ENCODE measurements at regions of chrX and their contacts with region 1.

Region 1: GRCh38 chrX:115584696-115585095 is 23.7 kb downstream of the PLS3 start:
- DNase-seq: no peak
- H3K4me3 Mint-ChIP-seq: no peak overlapping the region
- H3K27ac Mint-ChIP-seq: no peak overlapping the region
- H3K4me1 Mint-ChIP-seq: no peaks in the 10 kb centered on the region
- H3K27me3 Mint-ChIP-seq: no peaks in the 10 kb centered on the region

Region 2: GRCh38 chrX:115602729-115603389 is 18.2 kb after region 1 on chrX:
- CTCF ChIA-PET with region 1: no interaction called
- POLR2A ChIA-PET with region 1: no interaction called
- intact Hi-C with region 1: no loop called
- DNase-seq: no peak
- H3K4me3 Mint-ChIP-seq: no peak overlapping the region
- H3K27ac Mint-ChIP-seq: no peak overlapping the region
- H3K4me1 Mint-ChIP-seq: no peaks in the 10 kb centered on the region
- H3K27me3 Mint-ChIP-seq: no peaks in the 10 kb centered on the region

Region 3: GRCh38 chrX:115616943-115617563 is 32.4 kb after region 1 on chrX:
- CTCF ChIA-PET with region 1: no interaction called
- POLR2A ChIA-PET with region 1: no interaction called
- intact Hi-C with region 1: loop called (anchors 2 kb)
- DNase-seq: no peak
- H3K4me3 Mint-ChIP-seq: no peak overlapping the region
- H3K27ac Mint-ChIP-seq: no peak overlapping the region
- H3K4me1 Mint-ChIP-seq: peaks cover 10% of the 10 kb centered on the region
- H3K27me3 Mint-ChIP-seq: no peaks in the 10 kb centered on the region

Region 4: GRCh38 chrX:116031331-116031730 is 446.6 kb after region 1 on chrX:
- CTCF ChIA-PET with region 1: no interaction called
- POLR2A ChIA-PET with region 1: no interaction called
- intact Hi-C with region 1: no loop called
- DNase-seq: no peak
- H3K4me3 Mint-ChIP-seq: no peak overlapping the region
- H3K27ac Mint-ChIP-seq: no peak overlapping the region
- H3K4me1 Mint-ChIP-seq: no peaks in the 10 kb centered on the region
- H3K27me3 Mint-ChIP-seq: no peaks in the 10 kb centered on the region